Endothelial cell of umbilical vein (primary cell): ENCODE measurements at regions of chr9 and their contacts with region 1.

Region 1: DNA sequence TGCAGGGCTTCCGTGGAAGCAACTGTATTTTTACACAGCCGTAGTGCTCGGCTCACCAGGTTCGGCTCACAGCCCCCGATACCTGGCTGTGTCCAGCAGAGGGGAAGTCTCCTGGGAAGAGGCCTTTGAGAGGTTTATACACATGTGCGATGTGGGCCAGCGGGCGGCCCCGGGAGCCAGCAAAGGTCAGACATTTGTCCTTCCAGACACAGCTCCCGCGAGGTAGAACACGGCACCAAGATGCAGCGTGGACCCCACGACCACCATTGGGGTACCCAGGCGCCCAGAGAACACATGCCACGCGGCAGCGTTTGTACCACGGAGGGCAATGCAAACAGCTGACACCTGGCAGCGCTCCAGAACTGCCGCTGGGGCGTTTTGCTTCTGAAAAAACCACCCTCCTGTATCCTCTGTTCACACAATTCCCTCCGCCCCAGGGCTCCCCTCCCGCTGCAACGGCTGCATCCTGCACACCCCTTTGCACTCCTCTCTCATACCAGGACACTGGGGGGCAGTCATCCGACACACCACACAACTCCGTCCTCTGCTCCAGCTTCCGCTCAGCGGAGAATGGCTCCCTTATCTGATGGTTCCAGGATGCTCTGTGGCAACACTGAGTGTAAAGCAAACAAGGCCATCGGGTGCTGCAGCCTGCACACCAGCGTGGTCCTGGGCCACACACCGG is 235.3 kb downstream of the SYK start:
- DNase-seq: peak; percentile 94
- H3K4me3 ChIP-seq: no peak overlapping the region
- H3K27ac ChIP-seq: peak overlapping the region; percentile 89
- H3K4me1 ChIP-seq: peaks cover 17% of the 10 kb centered on the region
- H3K27me3 ChIP-seq: no peaks in the 10 kb centered on the region
- CTCF ChIP-seq: peak; percentile 78 to 83
- POLR2A ChIP-seq: no peak

Region 2: GRCh38 chr9:91023741-91024140 is 13.2 kb before region 1 on chr9:
- CTCF ChIA-PET with region 1: no interaction called
- POLR2A ChIA-PET with region 1: no interaction called
- dilution Hi-C with region 1: no loop called
- intact Hi-C with region 1: no loop called
- DNase-seq: no peak
- H3K4me3 ChIP-seq: no peak overlapping the region
- H3K27ac ChIP-seq: no peak overlapping the region
- H3K4me1 ChIP-seq: no peaks in the 10 kb centered on the region
- H3K27me3 ChIP-seq: no peaks in the 10 kb centered on the region
- CTCF ChIP-seq: no peak
- POLR2A ChIP-seq: no peak

Region 3: DNA sequence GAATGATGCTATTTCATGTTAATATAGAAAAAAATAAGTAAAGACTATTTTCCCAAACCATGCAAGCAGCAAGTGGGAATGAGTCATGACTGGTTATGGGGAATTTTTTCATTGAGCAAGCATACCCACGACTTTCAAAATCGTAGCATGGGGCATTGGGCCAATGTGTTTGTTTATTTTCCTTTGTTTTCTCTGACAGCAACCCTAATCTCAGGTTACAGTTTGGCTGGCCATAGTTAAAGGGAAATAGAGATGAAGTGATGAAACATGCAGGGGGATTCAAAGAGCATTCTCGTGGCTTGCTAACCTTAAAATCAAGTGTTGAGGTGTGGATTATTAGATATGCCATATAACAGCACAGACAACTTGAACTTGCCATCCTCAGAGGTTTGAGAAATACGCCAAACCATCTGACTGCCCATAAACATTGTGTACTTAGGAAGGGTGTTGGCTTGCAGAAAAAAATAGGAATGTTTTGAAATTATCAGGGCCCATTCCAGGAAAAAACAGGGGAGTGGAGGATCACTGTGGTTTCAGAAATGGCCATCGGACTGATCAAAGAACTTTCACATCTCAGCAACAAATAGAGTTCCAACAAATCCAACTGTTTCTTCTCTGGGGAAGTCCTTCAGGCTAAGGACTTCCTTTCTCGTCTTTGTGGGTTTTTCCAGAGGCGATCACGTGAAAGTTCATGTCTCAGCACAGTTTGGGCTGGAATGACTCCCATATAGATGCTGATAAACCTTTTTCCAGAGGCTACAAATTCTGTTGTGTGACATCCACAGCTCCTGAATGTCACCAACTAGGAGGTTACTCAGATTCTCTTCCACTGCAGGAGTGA is 23.8 kb after region 1 on chr9:
- CTCF ChIA-PET with region 1: interaction called, 8 read pairs
- POLR2A ChIA-PET with region 1: no interaction called
- dilution Hi-C with region 1: no loop called
- intact Hi-C with region 1: loop called (anchors 1 kb)
- DNase-seq: peak; percentile 98
- H3K4me3 ChIP-seq: peak overlapping the region in 1 of 3 experiments; percentile 2
- H3K27ac ChIP-seq: peak overlapping the region; percentile 68
- H3K4me1 ChIP-seq: peaks cover 43% of the 10 kb centered on the region
- H3K27me3 ChIP-seq: no peaks in the 10 kb centered on the region
- CTCF ChIP-seq: no peak
- POLR2A ChIP-seq: no peak

Region 4: GRCh38 chr9:91193658-91194391 is 156.9 kb after region 1 on chr9:
- CTCF ChIA-PET with region 1: interaction called, 3 read pairs
- POLR2A ChIA-PET with region 1: interaction called, 6 read pairs
- dilution Hi-C with region 1: no loop called
- intact Hi-C with region 1: loop called (anchors 1 kb)
- DNase-seq: peak; percentile 94
- H3K4me3 ChIP-seq: peak overlapping the region in 2 of 3 experiments; percentile 28 to 51
- H3K27ac ChIP-seq: peak overlapping the region; percentile 100
- H3K4me1 ChIP-seq: peaks cover 21% of the 10 kb centered on the region
- H3K27me3 ChIP-seq: no peaks in the 10 kb centered on the region
- CTCF ChIP-seq: no peak
- POLR2A ChIP-seq: peak; percentile 40

Region 5: GRCh38 chr9:91361291-91362050 is 324.5 kb after region 1 on chr9 and contains the start of gene AUH:
- CTCF ChIA-PET with region 1: interaction called, 8 read pairs
- POLR2A ChIA-PET with region 1: no interaction called
- dilution Hi-C with region 1: no loop called
- intact Hi-C with region 1: loop called (anchors 1 kb)
- DNase-seq: peak; percentile 82
- H3K4me3 ChIP-seq: peak within 1 kb of the TSS; percentile 84 to 95 (median 88)
- H3K27ac ChIP-seq: peak within 1 kb of the TSS; percentile 26
- H3K4me1 ChIP-seq: peaks cover 15% of the 10 kb centered on the region
- H3K27me3 ChIP-seq: no peaks in the 10 kb centered on the region
- CTCF ChIP-seq: no peak
- POLR2A ChIP-seq: peak; percentile 50
- total RNA-seq, gene AUH: 9.2 and 10.7 TPM in 2 replicates

Region 6: GRCh38 chr9:91433180-91433579 is 396.2 kb after region 1 on chr9:
- CTCF ChIA-PET with region 1: interaction called, 35 read pairs
- POLR2A ChIA-PET with region 1: no interaction called
- dilution Hi-C with region 1: no loop called
- intact Hi-C with region 1: no loop called
- DNase-seq: peak; percentile 85
- H3K4me3 ChIP-seq: no peak overlapping the region
- H3K27ac ChIP-seq: no peak overlapping the region
- H3K4me1 ChIP-seq: peaks cover 5% of the 10 kb centered on the region
- H3K27me3 ChIP-seq: peaks cover 2 to 4% of the 10 kb centered on the region in 2 experiments
- CTCF ChIP-seq: peak; percentile 51 to 53
- POLR2A ChIP-seq: no peak